Activated CD4-positive, alpha-beta memory T cell treated with anti-CD3 and anti-CD28 coated beads for 36 hours (primary cell): ENCODE measurements at regions of chr7 and their contacts with region 1.

Region 1: DNA sequence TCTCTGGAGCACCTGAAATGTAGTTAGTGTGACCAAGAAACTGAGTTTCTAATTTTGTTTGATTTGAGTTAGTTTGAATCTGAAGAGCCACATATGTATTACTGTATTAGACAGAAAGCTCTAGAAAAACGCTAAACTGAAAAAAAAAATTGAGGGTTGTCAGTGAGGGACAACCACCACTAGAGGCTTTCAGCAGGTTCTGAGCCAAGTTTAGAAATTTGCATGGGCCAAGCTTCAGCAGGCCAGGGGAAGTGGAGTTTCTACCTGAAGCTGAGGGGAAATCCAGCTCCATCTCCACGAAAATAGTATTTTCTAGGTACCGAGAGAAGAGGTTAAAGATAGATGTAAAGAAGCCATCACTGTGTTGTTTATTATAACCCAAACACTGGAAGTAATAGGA is 77.9 kb upstream of the PLXNA4 start:
- DNase-seq: peak; percentile 38
- H3K4me3 Mint-ChIP-seq: no peak overlapping the region
- H3K27ac Mint-ChIP-seq: peak overlapping the region; percentile 55
- H3K4me1 Mint-ChIP-seq: peaks cover 45% of the 10 kb centered on the region
- H3K27me3 Mint-ChIP-seq: no peaks in the 10 kb centered on the region

Region 2: DNA sequence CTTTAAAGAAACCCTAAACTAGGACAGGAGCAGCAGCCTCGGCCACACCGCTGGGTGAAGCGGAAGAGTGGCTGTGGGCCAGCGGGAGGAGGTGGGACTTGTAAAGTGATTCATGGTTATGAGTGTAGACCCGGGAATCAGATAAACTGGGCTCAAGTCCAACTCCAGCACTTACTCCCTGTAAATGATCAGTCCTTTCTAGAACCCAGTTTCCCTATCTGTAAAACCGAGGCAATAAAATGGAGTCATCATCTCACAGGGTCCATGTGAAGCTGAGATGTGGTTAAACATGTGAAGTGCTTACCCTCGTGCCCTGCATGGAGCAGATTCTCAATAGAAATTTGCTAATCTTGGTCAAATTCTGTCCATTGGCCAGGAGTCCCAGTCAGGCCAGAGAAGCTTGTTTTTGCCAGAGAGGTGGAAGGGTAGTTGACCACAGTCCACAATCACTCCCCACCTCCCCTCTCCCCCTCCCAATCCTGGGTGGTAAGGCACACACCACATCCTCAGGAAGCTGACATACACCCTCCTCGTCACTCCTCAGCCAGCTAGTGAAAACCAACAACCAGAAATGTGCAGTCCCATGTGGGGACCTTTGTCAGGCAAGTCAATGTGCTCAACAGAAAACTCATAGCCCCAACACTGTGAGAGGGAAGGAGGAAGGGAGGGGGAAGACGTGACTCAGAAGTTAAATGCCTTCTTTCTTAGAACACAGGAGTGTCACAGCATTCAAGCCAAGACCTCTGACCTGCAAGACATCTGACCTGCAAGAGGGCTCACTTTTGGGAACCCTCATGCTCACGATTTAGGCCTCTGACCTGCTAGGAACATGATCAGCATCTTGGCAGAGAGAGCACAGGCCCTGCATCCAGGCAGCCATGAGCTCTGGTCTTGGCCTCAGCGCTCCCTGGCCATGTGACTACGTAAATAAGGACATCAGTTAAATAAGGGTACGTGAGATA is 223.0 kb before region 1 on chr7:
- CTCF ChIA-PET with region 1: no interaction called
- POLR2A ChIA-PET with region 1: no interaction called
- intact Hi-C with region 1: loop called (anchors 10 kb)
- DNase-seq: peak; percentile 73
- H3K4me3 Mint-ChIP-seq: no peak overlapping the region
- H3K27ac Mint-ChIP-seq: peak overlapping the region; percentile 74
- H3K4me1 Mint-ChIP-seq: peaks cover 61% of the 10 kb centered on the region
- H3K27me3 Mint-ChIP-seq: peaks cover 3% of the 10 kb centered on the region

Region 3: GRCh38 chr7:132773527-132773956 is 119.4 kb after region 1 on chr7:
- CTCF ChIA-PET with region 1: interaction called, 5 read pairs
- POLR2A ChIA-PET with region 1: no interaction called
- intact Hi-C with region 1: loop called (anchors 2 kb)
- DNase-seq: no peak
- H3K4me3 Mint-ChIP-seq: no peak overlapping the region
- H3K27ac Mint-ChIP-seq: no peak overlapping the region
- H3K4me1 Mint-ChIP-seq: peaks cover 41% of the 10 kb centered on the region
- H3K27me3 Mint-ChIP-seq: peaks cover 9% of the 10 kb centered on the region

Region 4: DNA sequence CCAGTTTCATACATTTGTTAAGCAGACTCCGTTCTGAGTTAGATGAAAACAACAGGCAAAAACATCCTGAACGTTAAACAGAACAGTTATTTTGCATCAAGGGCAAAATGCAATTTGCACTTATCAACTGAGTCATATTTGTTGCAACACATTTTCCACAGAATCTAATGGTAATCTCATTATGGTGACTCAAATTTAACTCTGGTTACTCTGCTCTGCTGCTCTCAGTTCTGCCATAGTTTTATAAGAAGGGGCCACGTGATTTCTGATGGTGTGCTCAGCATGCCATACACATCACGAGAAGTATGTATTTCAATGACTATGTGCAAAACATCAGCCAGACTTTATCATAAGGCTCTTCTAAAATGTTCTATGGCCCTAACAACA is 278.9 kb after region 1 on chr7:
- CTCF ChIA-PET with region 1: no interaction called
- POLR2A ChIA-PET with region 1: no interaction called
- intact Hi-C with region 1: loop called (anchors 2 kb)
- DNase-seq: peak; percentile 13
- H3K4me3 Mint-ChIP-seq: no peak overlapping the region
- H3K27ac Mint-ChIP-seq: peak overlapping the region; percentile 75
- H3K4me1 Mint-ChIP-seq: peaks cover 17% of the 10 kb centered on the region
- H3K27me3 Mint-ChIP-seq: no peaks in the 10 kb centered on the region

Region 5: DNA sequence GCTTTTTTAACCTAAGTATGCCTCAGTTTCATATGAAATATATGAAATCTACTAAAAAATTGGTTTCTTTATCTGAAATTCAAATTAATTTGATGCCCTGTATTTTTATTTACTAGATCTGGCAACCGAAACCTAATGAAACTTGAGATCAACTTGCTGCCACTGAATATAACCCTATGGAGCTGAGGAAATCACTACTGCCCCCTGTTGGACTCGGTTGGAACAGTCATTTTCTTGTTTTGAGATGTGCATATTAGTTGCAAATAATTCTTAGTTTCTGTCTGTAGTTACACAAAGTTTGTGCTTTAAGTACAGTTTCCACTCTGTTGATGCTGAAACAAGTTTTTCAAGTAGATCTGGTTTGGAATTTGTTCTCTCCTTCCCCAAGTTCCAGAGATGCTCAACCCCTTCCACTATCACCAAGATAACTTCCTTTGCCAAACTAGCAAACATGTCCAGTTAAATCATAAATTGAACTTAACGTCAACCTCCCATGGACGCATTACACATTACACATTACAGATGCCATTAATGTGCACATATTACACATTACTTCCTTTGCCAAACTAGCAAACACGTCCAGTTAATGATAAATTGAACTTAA is 576.5 kb after region 1 on chr7:
- CTCF ChIA-PET with region 1: no interaction called
- POLR2A ChIA-PET with region 1: no interaction called
- intact Hi-C with region 1: loop called (anchors 10 kb)
- DNase-seq: peak; percentile 50
- H3K4me3 Mint-ChIP-seq: no peak overlapping the region
- H3K27ac Mint-ChIP-seq: no peak overlapping the region
- H3K4me1 Mint-ChIP-seq: no peaks in the 10 kb centered on the region
- H3K27me3 Mint-ChIP-seq: peaks cover 7% of the 10 kb centered on the region